ENCODE measurements at regions of chr15 and their contacts with region 1.

Region 1: DNA sequence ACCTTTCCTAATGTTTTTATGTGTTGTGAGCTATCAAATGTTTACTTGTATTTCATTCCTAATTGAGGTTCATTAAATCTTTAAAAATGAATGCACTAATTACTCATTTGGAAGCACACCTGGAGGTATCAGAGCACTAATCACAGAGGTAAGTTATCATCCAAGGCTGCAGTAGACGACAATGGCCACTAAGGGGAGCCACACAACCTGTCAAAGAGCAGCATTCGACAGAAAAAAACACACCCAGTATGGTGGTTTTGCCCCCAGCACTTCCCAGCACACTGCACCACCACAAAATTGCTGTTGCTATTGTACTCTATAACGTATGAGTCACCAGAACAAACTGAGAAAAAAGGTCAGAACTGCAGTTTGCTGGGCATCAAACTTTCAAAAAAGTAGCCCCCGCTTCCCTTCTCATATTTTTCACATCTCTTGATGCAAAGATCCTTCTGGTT is 205.9 kb upstream of the IGF1R start:
- DNase-seq: peak; percentile 89
- H3K4me3 Mint-ChIP-seq: no peak overlapping the region
- H3K27ac Mint-ChIP-seq: no peak overlapping the region
- H3K4me1 Mint-ChIP-seq: peaks cover 9% of the 10 kb centered on the region
- H3K27me3 Mint-ChIP-seq: peaks cover 22% of the 10 kb centered on the region
- CTCF ChIP-seq: peak; percentile 89

Region 2: GRCh38 chr15:97915261-97915660 is 527.1 kb before region 1 on chr15:
- CTCF ChIA-PET with region 1: no interaction called
- POLR2A ChIA-PET with region 1: no interaction called
- intact Hi-C with region 1: no loop called
- DNase-seq: no peak
- H3K4me3 Mint-ChIP-seq: no peak overlapping the region
- H3K27ac Mint-ChIP-seq: no peak overlapping the region
- H3K4me1 Mint-ChIP-seq: no peaks in the 10 kb centered on the region
- H3K27me3 Mint-ChIP-seq: no peaks in the 10 kb centered on the region
- CTCF ChIP-seq: no peak

Region 3: GRCh38 chr15:98455965-98456364 is 13.6 kb after region 1 on chr15:
- CTCF ChIA-PET with region 1: interaction called, 14 read pairs
- POLR2A ChIA-PET with region 1: no interaction called
- intact Hi-C with region 1: no loop called
- DNase-seq: no peak
- H3K4me3 Mint-ChIP-seq: no peak overlapping the region
- H3K27ac Mint-ChIP-seq: no peak overlapping the region
- H3K4me1 Mint-ChIP-seq: no peaks in the 10 kb centered on the region
- H3K27me3 Mint-ChIP-seq: peaks cover 31% of the 10 kb centered on the region
- CTCF ChIP-seq: no peak

Region 4: GRCh38 chr15:99059010-99059981 is 616.9 kb after region 1 on chr15:
- CTCF ChIA-PET with region 1: interaction called, 7 read pairs
- POLR2A ChIA-PET with region 1: no interaction called
- intact Hi-C with region 1: loop called (anchors 5 kb)
- DNase-seq: peak; percentile 50
- H3K4me3 Mint-ChIP-seq: peak overlapping the region; percentile 63
- H3K27ac Mint-ChIP-seq: no peak overlapping the region
- H3K4me1 Mint-ChIP-seq: no peaks in the 10 kb centered on the region
- H3K27me3 Mint-ChIP-seq: peaks cover 30% of the 10 kb centered on the region
- CTCF ChIP-seq: peak; percentile 81

Measured in MCF 10A (cell line).